CD14-positive monocyte (primary cell): ENCODE measurements at regions of chr6 and their contacts with region 1.

Region 1: DNA sequence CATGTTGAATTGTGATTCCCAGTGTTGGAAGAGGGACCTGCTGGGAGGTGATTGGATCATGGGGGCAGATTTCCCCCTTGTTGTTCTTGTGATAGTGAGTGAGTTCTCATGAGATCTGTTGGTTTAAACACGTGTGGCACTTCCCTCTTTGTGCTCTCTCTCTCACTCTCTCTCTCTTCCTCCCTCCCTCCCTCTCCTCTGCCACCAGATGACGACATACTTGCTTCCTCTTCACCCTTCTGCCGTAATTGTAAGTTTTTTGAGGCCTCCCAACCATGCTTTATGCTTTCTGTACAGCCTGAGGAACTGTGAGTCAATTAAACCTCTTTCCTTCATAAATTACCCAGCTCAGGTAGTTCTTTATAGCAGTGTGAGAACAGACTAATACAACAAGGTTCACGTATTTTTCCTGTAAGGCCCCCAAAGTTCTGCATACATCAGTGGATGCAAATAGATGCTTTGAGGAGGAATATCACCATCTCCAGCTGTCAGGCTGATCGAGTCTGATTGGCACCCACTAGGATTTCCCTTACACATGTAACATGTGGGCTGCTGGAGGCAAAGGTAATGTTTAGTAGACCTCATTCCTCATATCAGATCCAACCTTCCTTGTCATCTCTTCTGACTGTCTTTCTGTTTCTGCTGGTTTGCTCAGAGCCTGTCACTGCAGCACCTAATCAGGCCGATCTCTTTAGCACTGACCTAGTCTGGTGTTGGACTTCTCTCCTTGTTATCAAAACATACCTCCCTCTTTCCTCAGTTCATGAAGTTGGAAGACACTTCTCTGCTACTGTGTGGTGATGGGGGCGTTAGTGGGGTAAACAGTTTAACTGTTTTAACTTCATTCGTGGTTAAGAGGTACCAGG is 54.3 kb upstream of the BACH2 start:
- DNase-seq: peak; percentile 80 to 93 (median 84)
- H3K4me3 ChIP-seq: peak overlapping the region in 1 of 3 experiments; percentile 23
- H3K4me3 Mint-ChIP-seq: peak overlapping the region in 1 of 2 donors; percentile 55
- H3K27ac ChIP-seq: peak overlapping the region; percentile 54 to 81
- H3K27ac Mint-ChIP-seq: peak overlapping the region; percentile 79 to 95 (median 92)
- H3K4me1 ChIP-seq: peaks cover 25 to 27% of the 10 kb centered on the region in 2 donors
- H3K4me1 Mint-ChIP-seq: peaks cover 37% of the 10 kb centered on the region
- H3K27me3 ChIP-seq: no peaks in the 10 kb centered on the region
- H3K27me3 Mint-ChIP-seq: peaks cover 0 to 6% (median 1%) of the 10 kb centered on the region in 3 donors
- CTCF ChIP-seq: no peak

Region 2: DNA sequence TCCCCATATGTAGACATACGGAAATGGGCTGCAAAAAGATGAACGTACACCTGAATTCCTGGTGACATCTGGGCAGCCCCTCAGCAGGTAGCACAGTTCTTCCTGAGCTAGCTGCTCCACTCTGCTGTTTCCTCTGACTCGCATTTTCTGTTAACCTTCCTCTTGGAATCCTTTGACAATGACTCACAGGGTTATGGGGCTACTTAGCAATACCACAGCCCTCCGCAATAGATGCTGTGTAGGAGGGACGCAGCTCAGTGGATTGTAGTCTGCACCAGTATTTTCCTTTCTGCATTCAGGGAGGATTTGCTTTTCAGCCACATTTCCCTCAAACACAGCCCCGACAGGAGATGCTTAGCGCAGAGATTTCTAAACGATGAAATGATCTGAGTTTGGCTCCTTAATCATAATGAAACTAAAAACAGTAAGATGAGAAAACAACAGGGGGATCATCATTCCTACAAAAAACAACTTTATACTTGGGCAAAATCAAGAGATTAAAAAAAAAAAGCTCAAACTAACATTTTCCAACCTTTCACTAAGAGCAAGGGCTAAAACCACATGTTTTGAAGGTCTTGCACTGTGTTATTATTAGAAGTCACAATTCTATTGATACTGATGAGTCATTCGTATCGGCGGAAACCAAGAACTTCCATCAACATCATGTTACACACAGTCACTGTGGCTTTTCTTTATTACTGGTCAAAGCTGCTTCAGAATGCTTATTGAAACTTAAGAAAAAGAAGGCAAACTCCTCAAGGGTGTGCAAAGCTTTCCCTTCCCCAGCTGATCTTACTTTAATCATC is 66.5 kb before region 1 on chr6:
- intact Hi-C with region 1: loop called in 1 of 2 experiments (anchors 1 kb)
- DNase-seq: peak in 2 of 3 donors; percentile 30 to 61
- H3K4me3 ChIP-seq: peak overlapping the region; percentile 12 to 54 (median 37)
- H3K4me3 Mint-ChIP-seq: peak overlapping the region; percentile 69 to 75
- H3K27ac ChIP-seq: no peak overlapping the region
- H3K27ac Mint-ChIP-seq: peak overlapping the region in 6 of 7 donors; percentile 48 to 75 (median 64)
- H3K4me1 ChIP-seq: peaks cover 26% of the 10 kb centered on the region in 2 donors
- H3K4me1 Mint-ChIP-seq: peaks cover 28% of the 10 kb centered on the region
- H3K27me3 ChIP-seq: no peaks in the 10 kb centered on the region
- H3K27me3 Mint-ChIP-seq: peaks cover 0 to 6% (median 3%) of the 10 kb centered on the region in 3 donors
- CTCF ChIP-seq: no peak

Region 3: GRCh38 chr6:90370493-90370959 is 19.6 kb after region 1 on chr6:
- intact Hi-C with region 1: loop called in 1 of 2 experiments (anchors 1 kb)
- DNase-seq: no peak
- H3K4me3 ChIP-seq: no peak overlapping the region
- H3K4me3 Mint-ChIP-seq: no peak overlapping the region
- H3K27ac ChIP-seq: no peak overlapping the region
- H3K27ac Mint-ChIP-seq: no peak overlapping the region
- H3K4me1 ChIP-seq: no peaks in the 10 kb centered on the region
- H3K4me1 Mint-ChIP-seq: peaks cover 2% of the 10 kb centered on the region
- H3K27me3 ChIP-seq: no peaks in the 10 kb centered on the region
- H3K27me3 Mint-ChIP-seq: peaks cover 0 to 2% (median 0%) of the 10 kb centered on the region in 3 donors
- CTCF ChIP-seq: no peak

Region 4: DNA sequence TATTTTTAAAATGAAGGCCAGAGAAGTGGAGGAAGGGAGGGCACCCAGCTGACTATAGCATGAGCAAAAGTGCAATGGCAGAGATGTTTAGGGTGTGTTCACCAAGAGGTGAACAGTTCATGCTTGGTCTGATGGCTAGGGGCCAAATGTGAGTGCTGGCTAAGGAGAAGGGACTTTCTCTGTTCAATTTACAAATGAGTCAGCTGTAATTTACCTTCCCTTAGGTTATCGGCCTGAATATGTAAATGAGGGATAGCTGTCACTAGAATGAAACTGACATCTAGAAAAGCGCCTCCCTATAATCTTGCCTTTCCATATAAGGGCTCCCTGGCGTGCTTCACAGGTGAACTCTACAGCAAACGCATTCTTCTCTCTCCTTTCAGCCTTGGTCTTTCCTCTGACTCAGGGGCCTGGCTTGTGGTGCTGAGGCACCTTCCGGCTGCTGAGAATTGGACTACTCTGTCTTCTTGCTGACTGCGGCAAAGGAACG is 60.4 kb after region 1 on chr6:
- intact Hi-C with region 1: no loop called
- DNase-seq: no peak
- H3K4me3 ChIP-seq: no peak overlapping the region
- H3K4me3 Mint-ChIP-seq: no peak overlapping the region
- H3K27ac ChIP-seq: no peak overlapping the region
- H3K27ac Mint-ChIP-seq: no peak overlapping the region
- H3K4me1 ChIP-seq: no peaks in the 10 kb centered on the region
- H3K4me1 Mint-ChIP-seq: peaks cover 6% of the 10 kb centered on the region
- H3K27me3 ChIP-seq: no peaks in the 10 kb centered on the region
- H3K27me3 Mint-ChIP-seq: peaks cover 2 to 7% (median 4%) of the 10 kb centered on the region in 3 donors
- CTCF ChIP-seq: no peak